WTC11 (cell line): ENCODE measurements at regions of chr9 and their contacts with region 1.

Region 1: GRCh38 chr9:112887381-112887780 is 3.3 kb downstream of the SLC46A2 start:
- DNase-seq: peak; percentile 79
- ATAC-seq: peak; percentile 79
- H3K4me3 Mint-ChIP-seq: no peak overlapping the region
- H3K27ac Mint-ChIP-seq: no peak overlapping the region
- H3K4me1 Mint-ChIP-seq: peaks cover 9% of the 10 kb centered on the region
- H3K27me3 Mint-ChIP-seq: peaks cover 34% of the 10 kb centered on the region
- CTCF ChIP-seq: peak; percentile 45

Region 2: GRCh38 chr9:112717661-112718341 is 169.6 kb before region 1 on chr9 and contains the start of gene INIP:
- CTCF ChIA-PET with region 1: interaction called, 11 read pairs
- POLR2A ChIA-PET with region 1: interaction called, 3 read pairs
- DNase-seq: peak; percentile 97
- ATAC-seq: peak; percentile 91
- H3K4me3 Mint-ChIP-seq: peak within 1 kb of the TSS; percentile 99
- H3K27ac Mint-ChIP-seq: peak within 1 kb of the TSS; percentile 99
- H3K4me1 Mint-ChIP-seq: peaks cover 3% of the 10 kb centered on the region; the same call in 1 of the 2 replicates
- H3K27me3 Mint-ChIP-seq: 0 out of 2 replicates have a peak, but pooled peaks cover 2% of the 10 kb centered on the region
- CTCF ChIP-seq: no peak
- total RNA-seq, gene INIP: 16.0 to 19.1 TPM (median 16.7 TPM) in 3 replicates

Region 3: DNA sequence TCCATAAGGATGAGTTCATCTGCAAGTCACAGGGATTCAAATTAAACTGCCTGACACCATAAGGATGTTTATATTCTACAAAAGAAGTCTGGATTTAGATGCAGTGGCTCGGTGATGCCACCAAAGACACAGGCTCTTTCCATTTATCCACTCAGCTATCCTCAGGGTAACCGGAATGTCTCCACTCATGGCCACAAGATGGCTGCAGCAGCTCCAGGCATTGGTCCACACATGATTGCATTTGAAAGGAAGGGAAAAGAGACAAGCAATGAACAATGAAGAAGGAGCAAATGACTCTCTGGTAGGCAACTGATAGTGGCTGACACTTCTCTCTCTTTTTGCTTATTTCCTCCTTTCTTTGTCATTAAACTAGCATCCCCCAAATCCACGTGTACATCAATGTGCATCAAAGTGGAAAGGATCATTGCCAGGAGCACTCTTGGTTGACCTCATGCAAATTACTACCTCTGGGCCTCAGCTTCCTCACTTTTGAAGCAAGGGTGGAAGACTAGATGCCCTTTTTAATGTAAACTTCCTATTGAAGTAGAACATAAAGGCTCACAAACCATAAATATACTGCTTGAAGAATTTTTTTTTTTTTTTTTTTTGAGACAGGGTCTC is 144.1 kb before region 1 on chr9:
- CTCF ChIA-PET with region 1: no interaction called
- POLR2A ChIA-PET with region 1: no interaction called
- DNase-seq: no peak
- ATAC-seq: peak; percentile 50; the same call in 1 of the 2 replicates
- H3K4me3 Mint-ChIP-seq: no peak overlapping the region
- H3K27ac Mint-ChIP-seq: 0 out of 2 replicates have a peak overlapping the region, but pooled peaks have one; percentile 17
- H3K4me1 Mint-ChIP-seq: peaks cover 5% of the 10 kb centered on the region; the same call in 1 of the 2 replicates
- H3K27me3 Mint-ChIP-seq: no peaks in the 10 kb centered on the region
- CTCF ChIP-seq: no peak

Region 4: GRCh38 chr9:112844771-112845542 is 42.4 kb before region 1 on chr9:
- CTCF ChIA-PET with region 1: interaction called, 35 read pairs
- POLR2A ChIA-PET with region 1: no interaction called
- DNase-seq: peak; percentile 84
- ATAC-seq: peak; percentile 62
- H3K4me3 Mint-ChIP-seq: no peak overlapping the region
- H3K27ac Mint-ChIP-seq: no peak overlapping the region
- H3K4me1 Mint-ChIP-seq: peaks cover 51% of the 10 kb centered on the region
- H3K27me3 Mint-ChIP-seq: no peaks in the 10 kb centered on the region
- CTCF ChIP-seq: peak; percentile 94

Region 5: DNA sequence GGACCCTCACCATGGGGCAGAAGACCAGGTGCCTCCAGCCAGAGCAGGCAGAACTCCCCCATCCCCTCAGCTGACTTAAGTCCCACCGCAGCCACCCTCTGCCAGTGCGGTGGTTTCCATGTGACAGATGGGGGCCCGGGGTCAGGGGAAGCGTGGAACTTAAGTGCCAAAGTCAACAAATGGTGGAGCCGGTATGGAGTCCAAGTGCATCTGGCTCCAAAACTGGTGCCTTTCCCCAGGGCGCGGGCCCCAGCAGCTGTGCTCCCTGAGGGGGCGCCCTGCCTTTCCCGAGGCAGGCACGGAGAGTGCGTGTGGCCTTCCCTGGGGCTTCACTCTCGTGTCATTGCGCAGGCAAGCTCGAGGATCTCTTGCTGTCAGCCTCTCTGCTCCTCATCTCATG is 30.6 kb before region 1 on chr9:
- CTCF ChIA-PET with region 1: interaction called, 10 read pairs
- POLR2A ChIA-PET with region 1: no interaction called
- DNase-seq: no peak
- ATAC-seq: peak; percentile 62
- H3K4me3 Mint-ChIP-seq: no peak overlapping the region
- H3K27ac Mint-ChIP-seq: no peak overlapping the region
- H3K4me1 Mint-ChIP-seq: peaks cover 7% of the 10 kb centered on the region
- H3K27me3 Mint-ChIP-seq: no peaks in the 10 kb centered on the region
- CTCF ChIP-seq: no peak

Region 6: DNA sequence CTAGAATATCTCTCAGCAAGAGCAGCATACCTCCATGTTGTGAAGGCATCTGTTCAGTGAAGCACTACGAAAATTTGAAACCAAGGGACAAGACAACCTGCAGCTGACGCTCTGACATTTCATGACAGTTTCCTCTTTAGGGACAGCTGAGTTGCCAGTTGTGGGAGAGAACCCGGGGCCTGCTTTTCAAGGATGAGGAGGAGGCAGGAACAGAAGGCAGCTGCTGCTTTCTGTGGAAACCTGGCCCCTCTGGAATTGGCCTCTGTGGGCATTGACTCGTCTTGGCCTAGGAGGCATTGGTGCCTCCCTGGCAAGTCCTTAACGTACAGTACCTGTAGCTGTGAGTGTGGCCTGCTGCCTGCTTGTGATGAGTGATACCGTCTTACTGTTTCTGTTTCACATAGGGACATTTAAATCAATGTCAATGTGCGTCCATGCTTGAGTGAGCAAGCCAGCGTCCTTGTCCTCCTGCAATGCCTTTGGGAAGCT is 18.3 kb before region 1 on chr9:
- CTCF ChIA-PET with region 1: interaction called, 11 read pairs
- POLR2A ChIA-PET with region 1: interaction called, 3 read pairs
- DNase-seq: no peak
- ATAC-seq: no peak
- H3K4me3 Mint-ChIP-seq: no peak overlapping the region
- H3K27ac Mint-ChIP-seq: peak overlapping the region; percentile 66; the same call in 1 of the 2 replicates
- H3K4me1 Mint-ChIP-seq: peaks cover 24% of the 10 kb centered on the region
- H3K27me3 Mint-ChIP-seq: no peaks in the 10 kb centered on the region; the same call in 1 of the 2 replicates
- CTCF ChIP-seq: no peak

Region 7: DNA sequence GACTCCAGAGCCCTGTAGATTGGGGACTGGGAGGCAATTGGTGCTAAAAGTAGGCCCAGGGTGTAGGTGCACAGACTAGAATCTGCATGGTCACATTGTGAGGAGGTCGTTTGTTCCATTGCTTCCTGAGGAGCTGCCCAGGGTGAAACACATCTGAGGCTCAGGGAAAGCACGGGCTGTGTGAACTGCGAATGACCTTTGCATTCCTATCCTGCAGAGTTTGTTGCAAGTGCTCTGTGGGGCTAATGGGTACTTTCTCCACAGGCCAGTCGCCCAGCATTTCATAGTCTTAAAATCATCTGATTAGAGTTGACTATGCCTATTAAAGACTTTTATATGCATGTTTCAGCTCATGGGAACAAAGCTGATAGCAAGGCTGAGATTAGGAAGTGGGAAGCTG is 17.7 kb after region 1 on chr9:
- CTCF ChIA-PET with region 1: interaction called, 36 read pairs
- POLR2A ChIA-PET with region 1: no interaction called
- DNase-seq: no peak
- ATAC-seq: no peak
- H3K4me3 Mint-ChIP-seq: no peak overlapping the region
- H3K27ac Mint-ChIP-seq: no peak overlapping the region
- H3K4me1 Mint-ChIP-seq: no peaks in the 10 kb centered on the region; the same call in 1 of the 2 replicates
- H3K27me3 Mint-ChIP-seq: peaks cover 27% of the 10 kb centered on the region
- CTCF ChIP-seq: no peak